ENCODE measurements at regions of chr16 and their contacts with region 1.

Region 1: GRCh38 chr16:82639666-82640336 is 13.0 kb downstream of the CDH13 start:
- DNase-seq: no peak
- H3K4me3 ChIP-seq: no peak overlapping the region
- CTCF ChIP-seq: peak; percentile 76

Region 2: GRCh38 chr16:82653550-82654511 is 14.0 kb after region 1 on chr16:
- CTCF ChIA-PET with region 1: interaction called, 145 read pairs
- POLR2A ChIA-PET with region 1: interaction called, 4 read pairs
- DNase-seq: peak; percentile 80
- H3K4me3 ChIP-seq: peak overlapping the region; percentile 38
- CTCF ChIP-seq: no peak

Region 3: GRCh38 chr16:82694239-82694863 is 54.5 kb after region 1 on chr16:
- CTCF ChIA-PET with region 1: interaction called, 12 read pairs
- POLR2A ChIA-PET with region 1: no interaction called
- DNase-seq: peak; percentile 50
- H3K4me3 ChIP-seq: no peak overlapping the region
- CTCF ChIP-seq: no peak